ENCODE measurements at regions of chr2 and their contacts with region 1.

Region 1: GRCh38 chr2:203732092-203732952 is 25.9 kb downstream of the CD28 start:
- DNase-seq: no peak
- ATAC-seq: peak; percentile 33 to 52 (median 46)
- H3K4me3 ChIP-seq: no peak overlapping the region
- H3K4me3 Mint-ChIP-seq: peak overlapping the region; percentile 21 to 33 (median 32)
- H3K27ac ChIP-seq: peak overlapping the region; percentile 32
- H3K27ac Mint-ChIP-seq: peak overlapping the region; percentile 90 to 91
- H3K4me1 ChIP-seq: peaks cover 49 to 69% of the 10 kb centered on the region in 2 experiments
- H3K4me1 Mint-ChIP-seq: peaks cover 76 to 94% (median 92%) of the 10 kb centered on the region in 3 donors
- H3K27me3 ChIP-seq: no peaks in the 10 kb centered on the region
- H3K27me3 Mint-ChIP-seq: no peaks in the 10 kb centered on the region

Region 2: DNA sequence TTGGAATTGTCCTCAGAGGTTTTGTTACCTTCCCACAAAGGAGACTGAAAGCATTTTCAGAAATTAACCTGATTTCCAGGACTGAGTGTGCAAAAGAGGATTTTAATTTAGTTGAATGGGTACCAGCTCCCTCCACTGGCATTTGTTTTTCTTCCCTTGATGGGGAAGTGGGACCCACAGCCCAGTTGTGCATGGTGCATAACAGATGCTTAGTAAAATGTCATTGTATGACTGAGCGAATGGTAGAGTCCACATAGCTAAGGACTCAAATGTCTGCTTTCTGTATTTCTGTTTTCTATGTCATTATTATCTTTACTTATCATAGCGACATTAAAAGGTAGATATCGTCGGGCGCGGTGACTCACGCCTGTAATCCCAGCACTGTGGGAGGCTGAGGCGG is 121.8 kb before region 1 on chr2:
- CTCF ChIA-PET with region 1: no interaction called
- POLR2A ChIA-PET with region 1: interaction called in 1 of 2 experiments, 14 read pairs
- DNase-seq: no peak
- ATAC-seq: no peak
- H3K4me3 ChIP-seq: no peak overlapping the region
- H3K4me3 Mint-ChIP-seq: no peak overlapping the region
- H3K27ac ChIP-seq: no peak overlapping the region
- H3K27ac Mint-ChIP-seq: no peak overlapping the region
- H3K4me1 ChIP-seq: no peaks in the 10 kb centered on the region
- H3K4me1 Mint-ChIP-seq: no peaks in the 10 kb centered on the region
- H3K27me3 ChIP-seq: no peaks in the 10 kb centered on the region
- H3K27me3 Mint-ChIP-seq: no peaks in the 10 kb centered on the region